ENCODE measurements at regions of chr18 and their contacts with region 1.

Region 1: DNA sequence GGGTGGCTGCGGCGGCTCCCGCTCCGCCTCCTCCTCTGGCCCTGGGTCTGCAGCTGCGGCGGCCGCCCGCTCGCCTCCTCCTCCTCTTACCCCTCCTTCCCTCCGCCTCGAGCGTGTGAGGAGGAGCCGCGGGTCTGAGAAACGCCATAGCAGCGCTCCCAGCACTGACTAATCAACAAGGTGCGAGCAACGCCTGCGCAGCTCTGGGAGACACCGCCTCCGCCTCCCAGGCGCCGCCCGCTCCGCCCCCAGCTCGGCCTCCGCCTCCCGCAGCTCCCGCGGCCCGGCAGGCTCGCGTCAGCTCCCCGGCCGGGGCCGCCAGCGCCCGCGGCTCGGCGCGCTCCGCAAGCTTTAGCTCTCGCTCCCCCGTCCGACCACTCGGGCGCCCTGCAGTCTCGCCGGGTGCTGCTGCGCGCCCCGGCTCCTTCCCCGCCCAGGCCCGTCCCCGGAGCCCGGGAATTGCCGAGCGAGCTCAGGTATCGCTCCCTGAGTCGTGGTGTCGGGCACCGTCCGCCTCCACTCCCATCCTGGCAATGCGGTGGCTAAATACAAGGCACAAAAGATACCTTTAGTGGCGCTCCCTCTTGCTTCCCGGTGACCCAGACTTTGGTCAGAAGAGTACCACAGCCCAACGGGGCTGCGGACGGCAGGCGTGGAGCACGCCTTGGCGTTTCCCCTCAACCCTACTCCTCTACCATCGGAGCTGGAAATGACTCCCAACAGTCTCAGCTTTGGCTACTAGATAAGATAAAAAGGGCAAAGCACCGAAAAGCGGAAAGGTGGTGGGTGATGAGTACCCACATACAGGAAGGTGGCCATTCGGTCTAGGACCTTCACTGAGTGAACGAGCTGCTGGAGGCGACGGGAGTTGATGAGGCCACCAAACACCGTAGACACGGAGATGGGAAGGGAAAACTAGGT is at the start of gene GAREM1:
- DNase-seq: peak; percentile 21
- ATAC-seq: peak; percentile 99
- H3K4me3 ChIP-seq: peak within 1 kb of the TSS; percentile 36
- H3K27ac ChIP-seq: no peak within 1 kb of the TSS
- H3K4me1 ChIP-seq: no peaks in the 10 kb centered on the region
- H3K27me3 ChIP-seq: peaks cover 8 to 24% of the 10 kb centered on the region in 2 experiments
- CTCF ChIP-seq: peak; percentile 34 to 57 (median 56); a peak in 4 of 6 replicates
- EP300 ChIP-seq: no peak
- POLR2A ChIP-seq: peak; percentile 56; the same call in 1 of the 2 replicates
- RAD21 ChIP-seq: peak; percentile 37
- polyA plus RNA-seq, gene GAREM1: not detected

Region 2: DNA sequence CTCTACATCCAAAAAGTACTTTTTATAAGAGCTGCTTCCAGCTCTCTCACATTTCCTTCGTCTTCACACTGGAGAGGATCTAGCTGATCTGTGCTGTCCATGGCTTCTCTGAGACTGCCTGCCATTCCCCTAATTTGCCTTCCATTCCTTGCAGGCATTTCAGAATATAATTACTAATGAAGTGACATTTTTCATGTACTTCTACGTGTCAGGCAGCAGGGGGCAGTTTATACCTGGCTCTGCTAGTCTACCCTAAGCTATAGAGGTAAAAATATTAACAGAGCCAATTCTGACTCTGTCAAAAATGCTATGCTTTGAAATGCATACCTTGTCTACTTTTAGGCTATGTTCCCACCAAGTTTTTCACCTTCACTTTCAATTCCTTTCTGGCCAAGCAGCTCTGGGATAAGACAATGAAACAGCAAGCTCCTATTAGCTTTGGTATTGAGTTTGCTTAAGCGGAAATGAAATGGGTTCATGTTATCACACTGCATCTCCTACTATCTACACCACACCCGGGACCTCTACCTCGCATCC is 199.2 kb before region 1 on chr18:
- CTCF ChIA-PET with region 1: interaction called, 9 read pairs
- POLR2A ChIA-PET with region 1: no interaction called
- RAD21 ChIA-PET with region 1: interaction called, 3 read pairs
- SMC1A ChIA-PET with region 1: no interaction called
- in situ Hi-C with region 1: no loop called
- intact Hi-C with region 1: loop called (anchors 10 kb)
- DNase-seq: no peak
- ATAC-seq: peak; percentile 82
- H3K4me3 ChIP-seq: no peak overlapping the region
- H3K27ac ChIP-seq: no peak overlapping the region
- H3K4me1 ChIP-seq: no peaks in the 10 kb centered on the region
- H3K27me3 ChIP-seq: peaks cover 0 to 6% of the 10 kb centered on the region in 2 experiments; a peak in 2 of 4 replicates
- CTCF ChIP-seq: peak; percentile 53 to 63 (median 58); a peak in 5 of 6 replicates
- EP300 ChIP-seq: no peak
- POLR2A ChIP-seq: no peak
- RAD21 ChIP-seq: peak; percentile 68

Region 3: DNA sequence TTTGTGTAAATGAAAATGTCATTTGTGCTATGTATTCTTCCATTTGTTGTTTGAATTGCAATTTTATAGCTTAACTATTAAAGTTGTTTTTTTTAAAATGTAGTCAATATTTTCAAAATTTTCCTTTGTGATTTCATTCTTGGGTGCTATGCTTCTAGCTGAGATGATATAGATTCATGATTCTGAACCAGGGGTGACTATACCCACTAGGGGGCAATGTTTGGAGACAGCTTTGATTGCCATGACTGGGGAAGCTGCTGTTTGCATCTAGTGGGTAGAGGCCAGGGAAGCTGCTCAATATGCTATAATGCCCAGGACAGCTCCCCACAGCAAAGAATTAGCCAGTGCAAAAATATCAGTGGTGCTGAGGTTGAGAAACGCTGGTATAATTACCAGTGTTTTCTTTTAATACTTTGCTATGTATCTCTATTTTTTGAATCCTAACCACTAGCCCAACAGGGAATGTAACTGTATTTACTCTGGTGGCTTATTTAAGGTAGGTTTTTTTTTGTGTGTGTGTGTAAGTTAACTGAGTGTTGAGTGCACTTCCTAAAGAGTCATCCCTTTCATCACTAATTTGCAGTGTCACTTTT is 181.4 kb before region 1 on chr18:
- CTCF ChIA-PET with region 1: interaction called, 13 read pairs
- POLR2A ChIA-PET with region 1: no interaction called
- RAD21 ChIA-PET with region 1: interaction called, 9 read pairs
- SMC1A ChIA-PET with region 1: no interaction called
- in situ Hi-C with region 1: no loop called
- intact Hi-C with region 1: no loop called
- DNase-seq: no peak
- ATAC-seq: peak; percentile 84
- H3K4me3 ChIP-seq: no peak overlapping the region
- H3K27ac ChIP-seq: no peak overlapping the region
- H3K4me1 ChIP-seq: no peaks in the 10 kb centered on the region
- H3K27me3 ChIP-seq: no peaks in the 10 kb centered on the region
- CTCF ChIP-seq: peak; percentile 47 to 68 (median 63)
- EP300 ChIP-seq: no peak
- POLR2A ChIP-seq: no peak
- RAD21 ChIP-seq: peak; percentile 53

Region 4: GRCh38 chr18:32454593-32454992 is 16.4 kb before region 1 on chr18:
- CTCF ChIA-PET with region 1: no interaction called
- POLR2A ChIA-PET with region 1: no interaction called
- RAD21 ChIA-PET with region 1: no interaction called
- SMC1A ChIA-PET with region 1: no interaction called
- in situ Hi-C with region 1: no loop called
- intact Hi-C with region 1: no loop called
- DNase-seq: no peak
- ATAC-seq: no peak
- H3K4me3 ChIP-seq: no peak overlapping the region
- H3K27ac ChIP-seq: no peak overlapping the region
- H3K4me1 ChIP-seq: no peaks in the 10 kb centered on the region
- H3K27me3 ChIP-seq: no peaks in the 10 kb centered on the region; a peak in 1 of 4 replicates
- CTCF ChIP-seq: no peak
- EP300 ChIP-seq: no peak
- POLR2A ChIP-seq: no peak
- RAD21 ChIP-seq: no peak

Measured in GM12878 (cell line).